ENCODE measurements at regions of chr22 and their contacts with region 1.

Region 1: DNA sequence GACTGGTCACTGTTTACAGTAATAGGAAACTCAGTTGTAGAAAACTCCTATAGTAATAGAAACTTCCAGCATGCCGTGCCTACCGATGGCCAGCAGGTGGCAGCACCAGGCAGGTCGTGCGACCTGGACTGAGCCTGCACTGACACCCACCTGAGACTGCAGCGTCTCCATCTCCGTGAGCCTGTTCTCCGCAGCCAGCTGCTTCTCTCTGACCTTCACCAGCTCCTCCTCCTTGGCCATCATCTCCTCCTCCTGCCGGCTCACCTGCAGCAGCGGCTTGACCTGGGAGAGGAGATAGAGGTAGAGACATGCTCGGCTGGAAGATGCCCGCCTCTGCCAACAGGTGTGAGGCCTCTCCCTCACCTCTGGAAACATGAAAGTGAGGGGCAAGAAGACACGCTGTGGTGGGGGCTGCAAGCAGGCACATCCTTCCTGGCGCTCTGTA is 48.5 kb downstream of the APOL1 start:
- DNase-seq: peak; percentile 64 to 84
- H3K4me3 ChIP-seq: no peak overlapping the region
- H3K27ac ChIP-seq: no peak overlapping the region
- H3K4me1 ChIP-seq: peaks cover 21% of the 10 kb centered on the region
- H3K27me3 ChIP-seq: no peaks in the 10 kb centered on the region
- CTCF ChIP-seq: peak; percentile 100

Region 2: DNA sequence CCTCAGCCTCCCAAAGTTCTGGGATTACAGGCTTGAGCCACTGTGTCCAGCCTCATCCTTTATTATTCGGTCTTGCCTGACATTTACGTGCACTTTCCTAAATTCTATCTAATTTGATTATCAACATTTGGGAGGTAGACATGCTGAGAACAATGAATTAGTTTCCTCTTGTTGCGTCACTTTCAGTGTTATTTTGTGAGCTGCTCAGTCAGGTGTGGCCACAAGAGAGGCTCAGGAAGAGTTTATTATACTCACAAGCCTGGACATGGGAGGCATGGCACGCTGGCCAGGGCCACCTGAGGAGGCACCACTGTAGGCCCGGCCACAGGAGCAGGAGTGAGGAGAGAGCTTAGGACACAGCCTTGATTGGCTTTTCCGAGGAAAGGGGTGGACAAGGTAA is 213.1 kb before region 1 on chr22:
- CTCF ChIA-PET with region 1: no interaction called
- POLR2A ChIA-PET with region 1: interaction called, 12 read pairs
- intact Hi-C with region 1: no loop called
- DNase-seq: peak in 1 of 2 experiments; percentile 6
- H3K4me3 ChIP-seq: no peak overlapping the region
- H3K27ac ChIP-seq: no peak overlapping the region
- H3K4me1 ChIP-seq: peaks cover 9% of the 10 kb centered on the region
- H3K27me3 ChIP-seq: no peaks in the 10 kb centered on the region
- CTCF ChIP-seq: no peak

Region 3: GRCh38 chr22:36201630-36202319 is 99.6 kb before region 1 on chr22 and contains the start of gene APOL4:
- CTCF ChIA-PET with region 1: no interaction called
- POLR2A ChIA-PET with region 1: no interaction called
- intact Hi-C with region 1: no loop called
- DNase-seq: no peak
- H3K4me3 ChIP-seq: peak within 1 kb of the TSS; percentile 36; the same call in 1 of the 2 replicates
- H3K27ac ChIP-seq: peak within 1 kb of the TSS; percentile 34; the same call in 1 of the 2 replicates
- H3K4me1 ChIP-seq: peaks cover 21% of the 10 kb centered on the region
- H3K27me3 ChIP-seq: no peaks in the 10 kb centered on the region
- CTCF ChIP-seq: no peak
- total RNA-seq, gene APOL4: not detected in 2 replicates

Region 4: DNA sequence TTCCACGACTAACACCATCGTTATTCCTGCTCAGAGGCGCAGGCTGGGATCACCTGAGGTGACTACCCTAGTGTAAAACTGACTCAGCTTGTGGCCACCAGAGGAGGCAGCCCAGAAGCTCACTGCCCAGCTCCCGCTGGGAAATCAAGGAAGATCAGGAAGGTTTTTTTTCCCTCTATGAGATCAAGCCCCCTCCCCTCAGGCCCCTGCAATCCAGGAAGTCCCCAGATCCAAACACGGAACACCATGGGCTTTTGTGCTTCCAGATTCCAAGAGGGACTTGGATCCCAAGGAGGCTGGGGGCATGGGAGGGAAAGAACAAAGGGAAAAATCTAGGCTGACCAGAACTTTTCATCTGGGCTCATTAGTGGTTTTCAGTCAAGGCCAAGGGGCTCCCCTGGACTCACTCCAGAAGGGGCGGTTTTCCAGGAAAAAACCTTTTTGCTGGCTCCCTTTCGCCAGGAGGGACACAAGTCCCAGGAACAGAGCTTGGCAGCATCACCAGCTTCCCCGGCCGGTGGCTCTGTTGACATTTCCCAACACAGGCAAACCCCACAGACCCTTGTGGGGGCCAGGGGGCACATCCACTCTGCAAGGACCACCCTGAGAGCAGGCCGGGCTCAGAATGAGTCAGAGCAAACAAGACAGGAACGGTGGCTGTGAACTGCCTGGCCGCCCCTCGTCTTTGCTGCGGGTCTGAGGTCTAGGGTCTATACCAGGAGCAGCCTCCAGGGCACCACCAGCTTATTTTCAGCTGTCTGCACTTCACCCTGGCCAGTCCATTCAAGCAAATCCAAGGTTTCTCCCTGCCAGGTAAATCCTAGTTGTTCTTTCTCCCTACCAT is 49.6 kb after region 1 on chr22:
- CTCF ChIA-PET with region 1: no interaction called
- POLR2A ChIA-PET with region 1: no interaction called
- intact Hi-C with region 1: loop called (anchors 5 kb)
- DNase-seq: no peak
- H3K4me3 ChIP-seq: no peak overlapping the region
- H3K27ac ChIP-seq: peak overlapping the region; percentile 25
- H3K4me1 ChIP-seq: peaks cover 22% of the 10 kb centered on the region
- H3K27me3 ChIP-seq: no peaks in the 10 kb centered on the region
- CTCF ChIP-seq: no peak

Region 5: GRCh38 chr22:36377022-36377631 is 75.7 kb after region 1 on chr22:
- CTCF ChIA-PET with region 1: interaction called, 24 read pairs
- POLR2A ChIA-PET with region 1: no interaction called
- intact Hi-C with region 1: no loop called
- DNase-seq: no peak
- H3K4me3 ChIP-seq: no peak overlapping the region
- H3K27ac ChIP-seq: peak overlapping the region; percentile 4; the same call in 1 of the 2 replicates
- H3K4me1 ChIP-seq: peaks cover 93% of the 10 kb centered on the region
- H3K27me3 ChIP-seq: no peaks in the 10 kb centered on the region
- CTCF ChIP-seq: no peak

Region 6: GRCh38 chr22:36470162-36470993 is 169.0 kb after region 1 on chr22:
- CTCF ChIA-PET with region 1: interaction called, 9 read pairs
- POLR2A ChIA-PET with region 1: interaction called, 6 read pairs
- intact Hi-C with region 1: loop called (anchors 1 kb)
- DNase-seq: peak; percentile 77 to 86
- H3K4me3 ChIP-seq: no peak overlapping the region
- H3K27ac ChIP-seq: no peak overlapping the region
- H3K4me1 ChIP-seq: peaks cover 66% of the 10 kb centered on the region
- H3K27me3 ChIP-seq: no peaks in the 10 kb centered on the region
- CTCF ChIP-seq: peak; percentile 99